Activated naive CD4-positive, alpha-beta T cell treated with anti-CD3 and anti-CD28 coated beads for 36 hours (primary cell): ENCODE measurements at regions of chr2 and their contacts with region 1.

Region 1: GRCh38 chr2:69601179-69601612 is 42.3 kb downstream of the AAK1 start:
- DNase-seq: peak; percentile 24
- H3K4me3 Mint-ChIP-seq: no peak overlapping the region
- H3K27ac Mint-ChIP-seq: peak overlapping the region; percentile 79
- H3K4me1 Mint-ChIP-seq: peaks cover 92% of the 10 kb centered on the region
- H3K27me3 Mint-ChIP-seq: no peaks in the 10 kb centered on the region

Region 2: GRCh38 chr2:69581774-69582581 is 19.2 kb before region 1 on chr2:
- CTCF ChIA-PET with region 1: interaction called, 7 read pairs
- intact Hi-C with region 1: loop called (anchors 2 kb)
- DNase-seq: peak; percentile 25
- H3K4me3 Mint-ChIP-seq: peak overlapping the region; percentile 48
- H3K27ac Mint-ChIP-seq: peak overlapping the region; percentile 69
- H3K4me1 Mint-ChIP-seq: peaks cover 91% of the 10 kb centered on the region
- H3K27me3 Mint-ChIP-seq: no peaks in the 10 kb centered on the region

Region 3: DNA sequence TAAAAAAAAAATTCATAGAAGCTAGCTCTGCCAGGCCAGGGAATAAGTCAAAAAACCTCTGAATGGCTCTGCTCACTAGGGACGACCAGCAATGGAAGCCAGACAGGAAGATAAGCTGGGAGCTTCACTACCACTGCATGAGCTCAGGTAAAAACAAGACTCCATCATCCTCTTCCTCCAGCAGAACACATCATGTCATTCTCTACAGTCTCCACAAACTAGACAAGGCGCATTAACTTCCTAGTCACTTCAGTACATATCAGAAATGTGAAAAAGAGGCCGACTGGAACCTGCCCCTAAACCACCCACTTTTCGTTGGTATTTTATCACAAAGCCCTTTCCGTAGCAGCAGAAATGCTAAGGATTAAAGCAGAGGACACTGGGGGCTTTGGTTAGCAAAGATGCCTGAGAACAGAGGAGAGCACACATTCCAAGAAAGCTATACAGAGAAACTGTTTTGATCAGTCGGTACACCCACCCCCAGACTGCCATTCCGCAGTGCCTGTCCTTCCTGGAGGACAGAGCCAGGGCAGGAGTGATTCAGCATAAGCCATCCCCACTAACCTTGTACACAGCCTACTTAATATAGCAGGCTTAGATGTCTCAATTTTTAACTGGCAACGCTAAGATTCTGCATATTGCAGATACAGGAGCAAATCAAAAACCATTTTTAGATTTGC is 11.1 kb before region 1 on chr2:
- CTCF ChIA-PET with region 1: interaction called, 5 read pairs
- intact Hi-C with region 1: loop called (anchors 1 kb)
- DNase-seq: no peak
- H3K4me3 Mint-ChIP-seq: peak overlapping the region; percentile 1
- H3K27ac Mint-ChIP-seq: peak overlapping the region; percentile 68
- H3K4me1 Mint-ChIP-seq: peaks cover 79% of the 10 kb centered on the region
- H3K27me3 Mint-ChIP-seq: no peaks in the 10 kb centered on the region

Region 4: GRCh38 chr2:69616756-69617155 is 15.6 kb after region 1 on chr2:
- CTCF ChIA-PET with region 1: interaction called, 10 read pairs
- intact Hi-C with region 1: loop called (anchors 1 kb)
- DNase-seq: peak; percentile 73
- H3K4me3 Mint-ChIP-seq: peak overlapping the region; percentile 11
- H3K27ac Mint-ChIP-seq: peak overlapping the region; percentile 57
- H3K4me1 Mint-ChIP-seq: peaks cover 37% of the 10 kb centered on the region
- H3K27me3 Mint-ChIP-seq: no peaks in the 10 kb centered on the region

Region 5: GRCh38 chr2:69683101-69683971 is 82.1 kb after region 1 on chr2:
- CTCF ChIA-PET with region 1: no interaction called
- intact Hi-C with region 1: loop called (anchors 5 kb)
- DNase-seq: no peak
- H3K4me3 Mint-ChIP-seq: peak overlapping the region; percentile 45
- H3K27ac Mint-ChIP-seq: peak overlapping the region; percentile 75
- H3K4me1 Mint-ChIP-seq: peaks cover 64% of the 10 kb centered on the region
- H3K27me3 Mint-ChIP-seq: no peaks in the 10 kb centered on the region